ENCODE measurements at regions of chr4 and their contacts with region 1.

Region 1: DNA sequence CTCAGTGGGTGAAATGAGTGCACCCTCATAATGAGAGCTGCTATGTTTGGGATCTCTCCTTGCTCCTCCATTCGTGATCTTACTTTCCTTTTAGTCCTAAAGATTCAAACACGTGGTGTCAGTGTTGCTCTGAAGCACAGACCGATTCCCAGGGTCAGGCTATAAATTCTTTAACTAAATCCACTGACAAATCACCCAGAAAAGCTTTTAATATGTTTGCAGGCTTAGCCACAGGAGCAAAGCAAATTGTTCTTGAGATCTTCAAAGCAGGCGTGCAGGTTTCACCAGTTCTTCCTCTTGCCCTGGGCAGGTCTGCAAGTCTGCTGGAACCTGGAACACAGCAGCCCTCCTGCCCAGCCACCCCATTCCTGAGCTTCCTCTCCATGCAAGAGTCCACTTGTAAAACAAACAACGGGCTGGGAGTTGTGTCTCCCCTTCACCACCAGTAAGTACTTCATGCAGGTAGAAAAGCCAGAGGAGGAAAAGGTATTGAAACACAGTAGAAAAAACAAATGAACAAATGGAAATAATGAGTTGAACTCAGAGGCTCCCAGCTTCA is 70.1 kb upstream of the ENPP6 start:
- DNase-seq: peak; percentile 76 to 93
- H3K4me3 ChIP-seq: peak overlapping the region; percentile 27; the same call in 1 of the 2 replicates
- H3K27ac ChIP-seq: peak overlapping the region; percentile 69
- H3K4me1 ChIP-seq: peaks cover 28% of the 10 kb centered on the region
- H3K27me3 ChIP-seq: no peaks in the 10 kb centered on the region
- CTCF ChIP-seq: peak; percentile 25; the same call in 1 of the 2 replicates

Region 2: GRCh38 chr4:184384056-184384809 is 96.5 kb after region 1 on chr4:
- CTCF ChIA-PET with region 1: interaction called, 5 read pairs
- POLR2A ChIA-PET with region 1: interaction called, 3 read pairs
- intact Hi-C with region 1: loop called (anchors 1 kb)
- DNase-seq: peak; percentile 44 to 74
- H3K4me3 ChIP-seq: peak overlapping the region; percentile 59; the same call in 1 of the 2 replicates
- H3K27ac ChIP-seq: peak overlapping the region; percentile 96
- H3K4me1 ChIP-seq: peaks cover 41% of the 10 kb centered on the region
- H3K27me3 ChIP-seq: no peaks in the 10 kb centered on the region
- CTCF ChIP-seq: no peak

Region 3: GRCh38 chr4:184400375-184400870 is 112.6 kb after region 1 on chr4:
- CTCF ChIA-PET with region 1: no interaction called
- POLR2A ChIA-PET with region 1: no interaction called
- intact Hi-C with region 1: loop called (anchors 5 kb)
- DNase-seq: peak; percentile 42 to 84
- H3K4me3 ChIP-seq: no peak overlapping the region
- H3K27ac ChIP-seq: peak overlapping the region; percentile 83
- H3K4me1 ChIP-seq: peaks cover 14% of the 10 kb centered on the region
- H3K27me3 ChIP-seq: no peaks in the 10 kb centered on the region
- CTCF ChIP-seq: no peak

Region 4: GRCh38 chr4:184538023-184538599 is 250.3 kb after region 1 on chr4:
- CTCF ChIA-PET with region 1: interaction called, 6 read pairs
- POLR2A ChIA-PET with region 1: no interaction called
- intact Hi-C with region 1: loop called (anchors 1 kb)
- DNase-seq: peak; percentile 65 to 71
- H3K4me3 ChIP-seq: peak overlapping the region; percentile 67
- H3K27ac ChIP-seq: peak overlapping the region; percentile 66
- H3K4me1 ChIP-seq: no peaks in the 10 kb centered on the region; the same call in 1 of the 2 replicates
- H3K27me3 ChIP-seq: no peaks in the 10 kb centered on the region
- CTCF ChIP-seq: peak; percentile 67

Region 5: GRCh38 chr4:184675821-184676492 is 388.2 kb after region 1 on chr4:
- CTCF ChIA-PET with region 1: no interaction called
- POLR2A ChIA-PET with region 1: no interaction called
- intact Hi-C with region 1: no loop called
- DNase-seq: no peak
- H3K4me3 ChIP-seq: no peak overlapping the region
- H3K27ac ChIP-seq: no peak overlapping the region
- H3K4me1 ChIP-seq: no peaks in the 10 kb centered on the region
- H3K27me3 ChIP-seq: no peaks in the 10 kb centered on the region
- CTCF ChIP-seq: no peak

Region 6: GRCh38 chr4:184688447-184688846 is 400.7 kb after region 1 on chr4:
- CTCF ChIA-PET with region 1: no interaction called
- POLR2A ChIA-PET with region 1: no interaction called
- intact Hi-C with region 1: loop called (anchors 5 kb)
- DNase-seq: peak; percentile 71 to 88
- H3K4me3 ChIP-seq: no peak overlapping the region
- H3K27ac ChIP-seq: peak overlapping the region; percentile 81
- H3K4me1 ChIP-seq: peaks cover 17% of the 10 kb centered on the region
- H3K27me3 ChIP-seq: no peaks in the 10 kb centered on the region
- CTCF ChIP-seq: no peak

Measured in PC-9 (cell line).